ENCODE measurements at regions of chr1 and their contacts with region 1.

Region 1: GRCh38 chr1:25819576-25820246 is at the start of gene MTFR1L:
- DNase-seq: peak; percentile 92
- H3K4me3 Mint-ChIP-seq: peak within 1 kb of the TSS; percentile 97
- H3K27ac Mint-ChIP-seq: peak within 1 kb of the TSS; percentile 90
- H3K4me1 Mint-ChIP-seq: peaks cover 26% of the 10 kb centered on the region
- H3K27me3 Mint-ChIP-seq: no peaks in the 10 kb centered on the region
- total RNA-seq, gene MTFR1L: 29.6 and 30.0 TPM in 2 replicates

Region 2: GRCh38 chr1:25520446-25521061 is 299.2 kb before region 1 on chr1:
- intact Hi-C with region 1: loop called (anchors 10 kb)
- DNase-seq: peak; percentile 51
- H3K4me3 Mint-ChIP-seq: no peak overlapping the region
- H3K27ac Mint-ChIP-seq: no peak overlapping the region
- H3K4me1 Mint-ChIP-seq: no peaks in the 10 kb centered on the region
- H3K27me3 Mint-ChIP-seq: peaks cover 4% of the 10 kb centered on the region

Region 3: GRCh38 chr1:25608488-25609178 is 211.1 kb before region 1 on chr1:
- intact Hi-C with region 1: no loop called
- DNase-seq: peak; percentile 80
- H3K4me3 Mint-ChIP-seq: no peak overlapping the region
- H3K27ac Mint-ChIP-seq: no peak overlapping the region
- H3K4me1 Mint-ChIP-seq: no peaks in the 10 kb centered on the region
- H3K27me3 Mint-ChIP-seq: peaks cover 69% of the 10 kb centered on the region

Region 4: DNA sequence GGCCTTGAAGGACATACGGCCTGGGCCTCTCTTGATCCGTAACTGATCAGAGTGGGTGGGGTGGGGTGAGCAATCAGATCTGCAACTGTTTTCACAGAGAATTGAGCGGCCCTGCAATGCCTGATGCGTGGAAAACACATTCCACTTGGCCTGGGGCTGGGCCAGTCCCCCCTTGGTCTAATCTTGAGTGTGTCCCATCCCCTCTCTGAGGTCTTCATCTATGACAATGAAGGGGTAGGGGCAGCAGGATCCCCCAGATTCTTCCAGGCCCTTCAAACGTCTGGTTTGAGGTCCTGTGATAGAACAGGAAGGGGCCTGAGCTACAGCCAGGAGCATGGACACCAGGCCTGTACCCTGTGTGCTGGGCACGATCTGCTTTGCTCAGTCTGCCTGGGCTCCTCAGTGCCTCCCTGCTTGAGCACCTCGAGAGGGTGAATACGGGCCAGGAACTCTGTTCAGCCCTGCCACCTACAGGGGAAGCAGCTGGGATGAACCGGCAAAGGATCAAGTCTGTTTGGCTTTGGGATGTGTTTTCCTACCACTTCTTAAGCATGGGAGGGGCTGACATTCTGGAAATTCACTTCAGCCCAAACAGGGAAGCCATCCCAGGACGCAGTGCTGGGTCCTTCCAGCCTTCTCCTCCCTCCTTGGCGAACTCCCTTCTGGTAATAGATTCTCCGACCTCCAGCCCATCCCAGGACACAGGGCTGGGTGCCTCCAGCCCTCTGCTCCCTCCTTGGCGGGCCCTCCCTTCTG is 75.7 kb before region 1 on chr1:
- intact Hi-C with region 1: no loop called
- DNase-seq: no peak
- H3K4me3 Mint-ChIP-seq: no peak overlapping the region
- H3K27ac Mint-ChIP-seq: no peak overlapping the region
- H3K4me1 Mint-ChIP-seq: no peaks in the 10 kb centered on the region
- H3K27me3 Mint-ChIP-seq: peaks cover 36% of the 10 kb centered on the region

Region 5: DNA sequence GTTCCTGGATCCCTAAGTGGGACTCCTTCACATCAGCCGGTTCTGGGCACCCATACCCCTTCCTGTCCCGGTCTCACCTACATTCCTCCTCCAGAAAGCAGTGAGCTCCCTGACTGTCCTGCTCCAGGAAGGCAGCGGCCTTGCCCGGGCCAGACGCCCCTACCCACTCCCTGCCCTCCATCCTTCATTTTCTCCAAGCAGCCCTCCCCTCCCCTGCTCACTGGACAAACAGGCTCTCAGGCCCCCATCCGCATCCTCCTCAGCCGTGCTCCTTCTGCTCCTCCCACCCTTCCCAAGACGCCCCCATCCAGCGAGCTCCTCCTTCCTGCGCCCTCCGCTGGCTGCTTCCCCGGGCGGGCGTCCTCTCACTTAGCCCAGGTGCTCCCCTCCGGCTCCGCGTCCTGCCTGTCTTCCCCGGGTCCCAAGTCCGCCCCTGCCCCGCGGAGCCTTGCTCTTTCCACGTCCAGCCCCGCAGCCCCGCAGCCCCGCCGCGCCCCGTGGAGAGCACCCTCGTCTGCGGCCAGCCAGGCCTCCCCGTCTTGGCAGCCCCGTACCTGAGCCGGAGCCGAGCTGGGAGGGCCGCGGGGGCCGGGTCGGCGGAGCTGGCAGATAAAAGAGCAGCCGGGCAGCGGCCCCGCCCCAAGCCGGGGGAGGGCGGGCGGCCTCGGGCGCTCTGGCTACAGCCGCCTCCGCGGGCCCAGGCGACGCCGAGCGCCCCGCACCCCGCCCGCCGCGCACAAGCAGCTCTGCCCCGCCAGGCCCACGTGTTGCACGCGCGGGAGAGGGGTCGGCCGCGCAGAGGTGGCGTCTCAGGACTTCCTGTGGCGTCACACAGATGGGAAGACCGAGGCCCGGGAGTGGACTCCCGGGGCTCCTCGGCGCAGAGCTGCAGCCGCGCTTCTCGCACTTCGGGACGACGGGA is 55.5 kb after region 1 on chr1 and contains the start of gene PAQR7:
- intact Hi-C with region 1: loop called (anchors 2 kb)
- DNase-seq: peak; percentile 57
- H3K4me3 Mint-ChIP-seq: peak within 1 kb of the TSS; percentile 85
- H3K27ac Mint-ChIP-seq: peak within 1 kb of the TSS; percentile 47
- H3K4me1 Mint-ChIP-seq: peaks cover 6% of the 10 kb centered on the region
- H3K27me3 Mint-ChIP-seq: peaks cover 10% of the 10 kb centered on the region
- total RNA-seq, gene PAQR7: 7.4 and 7.9 TPM in 2 replicates

Measured in activated T-helper 2 cell treated with anti-CD3 and anti-CD28 coated beads, Interferon-gamma antibody, Interleukin-2, Interleukin-4, amounts not matched to agents 10 μg/mL and 5 μg/mL and 100 μg/mL, durations not matched to agents 14 hours and 24 hours and 36 hours (primary cell).